MCF 10A (cell line): ENCODE measurements at regions of chr7 and their contacts with region 1.

Region 1: GRCh38 chr7:1555809-1556540 is at the start of gene TMEM184A:
- DNase-seq: peak; percentile 87
- H3K4me3 Mint-ChIP-seq: peak within 1 kb of the TSS; percentile 72
- H3K27ac Mint-ChIP-seq: peak within 1 kb of the TSS; percentile 94
- H3K4me1 Mint-ChIP-seq: peaks cover 22% of the 10 kb centered on the region
- H3K27me3 Mint-ChIP-seq: no peaks in the 10 kb centered on the region
- CTCF ChIP-seq: peak; percentile 66
- total RNA-seq, gene TMEM184A: 9.0 and 14.2 TPM in 2 replicates

Region 2: GRCh38 chr7:1503816-1504775 is 51.9 kb before region 1 on chr7 and contains the start of gene INTS1:
- CTCF ChIA-PET with region 1: interaction called, 6 read pairs
- POLR2A ChIA-PET with region 1: interaction called, 21 read pairs
- intact Hi-C with region 1: loop called (anchors 1 kb)
- DNase-seq: peak; percentile 92
- H3K4me3 Mint-ChIP-seq: peak within 1 kb of the TSS; percentile 85
- H3K27ac Mint-ChIP-seq: peak within 1 kb of the TSS; percentile 89
- H3K4me1 Mint-ChIP-seq: peaks cover 14% of the 10 kb centered on the region
- H3K27me3 Mint-ChIP-seq: no peaks in the 10 kb centered on the region
- CTCF ChIP-seq: peak; percentile 91
- total RNA-seq, gene INTS1: 86.3 and 93.5 TPM in 2 replicates

Region 3: DNA sequence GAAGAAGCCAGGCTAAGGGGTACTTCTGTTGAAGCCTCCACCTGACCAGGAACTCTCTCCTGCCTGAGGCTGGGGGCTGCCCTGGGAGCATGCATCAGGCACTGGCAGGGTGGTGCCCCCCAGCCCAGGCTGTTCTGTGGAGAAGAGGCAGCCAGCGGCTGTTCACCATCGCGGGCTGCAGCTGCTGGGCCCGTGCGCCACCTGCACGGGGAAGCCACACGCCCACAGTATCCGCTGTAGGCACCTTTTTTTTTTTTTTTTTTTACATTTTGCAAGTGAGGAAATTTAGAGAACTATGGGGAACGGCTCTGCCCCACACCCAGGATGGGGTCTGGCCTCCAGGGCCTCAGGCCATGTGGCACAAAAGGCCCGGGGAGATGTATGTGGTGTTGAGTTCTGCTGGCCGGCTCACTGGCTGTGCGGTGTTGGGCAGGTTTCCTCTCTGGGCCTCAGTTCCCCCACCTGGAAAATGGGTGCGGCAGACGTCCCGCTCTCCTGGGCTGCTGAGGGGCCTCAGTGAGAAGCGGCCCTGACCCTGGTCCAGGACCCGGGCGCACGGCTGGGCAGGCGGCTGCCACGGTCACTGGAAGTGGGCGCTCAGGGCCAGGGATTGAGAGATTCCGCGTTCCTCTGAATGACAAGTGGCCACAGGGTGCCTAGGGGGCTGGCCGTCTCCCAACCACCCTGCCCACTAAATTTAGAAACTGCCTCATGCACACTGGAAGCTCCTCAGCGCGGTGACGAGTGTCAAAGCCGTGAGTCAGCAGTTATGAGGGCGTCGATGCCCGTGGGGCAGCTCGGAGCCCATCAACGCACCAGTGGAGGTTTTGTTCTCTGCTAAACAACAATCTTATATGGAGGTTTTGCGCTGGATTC is 43.0 kb before region 1 on chr7:
- CTCF ChIA-PET with region 1: interaction called, 4 read pairs
- POLR2A ChIA-PET with region 1: interaction called, 23 read pairs
- intact Hi-C with region 1: no loop called
- DNase-seq: peak; percentile 95
- H3K4me3 Mint-ChIP-seq: peak overlapping the region; percentile 35
- H3K27ac Mint-ChIP-seq: peak overlapping the region; percentile 27
- H3K4me1 Mint-ChIP-seq: no peaks in the 10 kb centered on the region
- H3K27me3 Mint-ChIP-seq: no peaks in the 10 kb centered on the region
- CTCF ChIP-seq: no peak

Region 4: GRCh38 chr7:1532483-1533424 is 23.2 kb before region 1 on chr7:
- CTCF ChIA-PET with region 1: interaction called, 32 read pairs
- POLR2A ChIA-PET with region 1: interaction called, 118 read pairs
- intact Hi-C with region 1: loop called (anchors 1 kb)
- DNase-seq: peak; percentile 94
- H3K4me3 Mint-ChIP-seq: peak overlapping the region; percentile 81
- H3K27ac Mint-ChIP-seq: peak overlapping the region; percentile 86
- H3K4me1 Mint-ChIP-seq: peaks cover 12% of the 10 kb centered on the region
- H3K27me3 Mint-ChIP-seq: no peaks in the 10 kb centered on the region
- CTCF ChIP-seq: no peak

Region 5: GRCh38 chr7:1544178-1544895 is 11.6 kb before region 1 on chr7:
- CTCF ChIA-PET with region 1: interaction called, 11 read pairs
- POLR2A ChIA-PET with region 1: interaction called, 11 read pairs
- intact Hi-C with region 1: no loop called
- DNase-seq: no peak
- H3K4me3 Mint-ChIP-seq: no peak overlapping the region
- H3K27ac Mint-ChIP-seq: no peak overlapping the region
- H3K4me1 Mint-ChIP-seq: no peaks in the 10 kb centered on the region
- H3K27me3 Mint-ChIP-seq: no peaks in the 10 kb centered on the region
- CTCF ChIP-seq: no peak

Region 6: GRCh38 chr7:1569833-1570633 is 14.1 kb after region 1 on chr7 and contains the start of gene PSMG3:
- CTCF ChIA-PET with region 1: interaction called, 5 read pairs
- POLR2A ChIA-PET with region 1: interaction called, 28 read pairs
- intact Hi-C with region 1: no loop called
- DNase-seq: peak; percentile 90
- H3K4me3 Mint-ChIP-seq: peak within 1 kb of the TSS; percentile 72
- H3K27ac Mint-ChIP-seq: peak within 1 kb of the TSS; percentile 88
- H3K4me1 Mint-ChIP-seq: peaks cover 30% of the 10 kb centered on the region
- H3K27me3 Mint-ChIP-seq: no peaks in the 10 kb centered on the region
- CTCF ChIP-seq: no peak
- total RNA-seq, gene PSMG3: 38.2 and 42.1 TPM in 2 replicates